OCI-LY7 (cell line): ENCODE measurements at regions of chr1 and their contacts with region 1.

Region 1: DNA sequence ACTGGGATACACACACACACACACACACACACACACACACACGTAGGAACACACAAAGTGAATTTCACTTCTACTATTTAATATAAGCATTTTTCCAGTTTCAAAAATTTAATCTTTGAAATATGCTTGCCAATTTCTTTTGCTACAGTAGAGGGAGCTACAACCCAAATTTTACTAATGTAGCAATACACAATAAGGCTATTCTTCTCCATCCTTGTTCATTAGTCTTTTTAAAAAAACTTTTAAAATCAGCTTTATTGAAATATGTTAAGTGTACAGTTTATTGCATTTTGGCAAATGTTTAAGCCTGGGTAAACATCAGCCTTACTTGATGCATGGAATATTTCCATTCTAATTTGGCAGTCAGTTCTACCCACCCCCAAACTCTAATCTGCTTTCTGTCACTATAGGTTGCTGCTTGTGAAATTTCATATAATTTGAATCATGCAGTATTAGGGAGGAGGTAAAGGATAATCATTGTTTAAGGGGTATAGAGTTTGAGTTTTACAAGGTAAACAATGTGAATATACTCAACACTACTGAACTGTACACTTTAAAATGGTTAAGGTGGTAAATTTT is 93.0 kb upstream of the TENT5C start:
- DNase-seq: peak; percentile 52
- H3K4me3 ChIP-seq: no peak overlapping the region
- H3K27ac ChIP-seq: no peak overlapping the region
- H3K4me1 ChIP-seq: no peaks in the 10 kb centered on the region
- CTCF ChIP-seq: peak; percentile 92

Region 2: DNA sequence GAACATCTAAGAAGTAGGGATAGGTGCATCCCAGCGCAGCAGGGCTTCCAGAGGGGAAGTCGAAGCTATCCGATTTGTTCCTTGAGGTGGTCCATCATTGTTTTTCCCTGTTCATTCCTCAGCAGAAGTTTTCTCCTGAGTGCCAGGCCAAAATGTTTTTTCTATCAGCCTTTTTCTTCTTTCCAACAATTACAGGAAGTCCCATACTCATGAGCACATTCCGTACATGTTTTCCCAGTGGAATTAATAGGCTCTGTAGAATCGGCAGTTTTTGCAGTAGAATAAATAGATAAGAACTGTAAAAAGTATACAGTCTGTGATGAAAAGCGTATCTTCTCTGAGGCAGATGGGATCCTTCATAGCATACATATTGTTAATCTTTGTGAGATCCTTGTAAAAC is 486.5 kb before region 1 on chr1:
- CTCF ChIA-PET with region 1: no interaction called
- POLR2A ChIA-PET with region 1: no interaction called
- intact Hi-C with region 1: no loop called
- DNase-seq: no peak
- H3K4me3 ChIP-seq: no peak overlapping the region
- H3K27ac ChIP-seq: no peak overlapping the region
- H3K4me1 ChIP-seq: no peaks in the 10 kb centered on the region
- CTCF ChIP-seq: no peak

Region 3: GRCh38 chr1:117758444-117759316 is 245.8 kb after region 1 on chr1:
- CTCF ChIA-PET with region 1: interaction called, 6 read pairs
- POLR2A ChIA-PET with region 1: interaction called, 3 read pairs
- intact Hi-C with region 1: loop called (anchors 1 kb)
- DNase-seq: peak; percentile 89
- H3K4me3 ChIP-seq: no peak overlapping the region
- H3K27ac ChIP-seq: no peak overlapping the region
- H3K4me1 ChIP-seq: peaks cover 5% of the 10 kb centered on the region
- CTCF ChIP-seq: peak; percentile 95